WTC11 (cell line): ENCODE measurements at regions of chr15 and their contacts with region 1.

Region 1: DNA sequence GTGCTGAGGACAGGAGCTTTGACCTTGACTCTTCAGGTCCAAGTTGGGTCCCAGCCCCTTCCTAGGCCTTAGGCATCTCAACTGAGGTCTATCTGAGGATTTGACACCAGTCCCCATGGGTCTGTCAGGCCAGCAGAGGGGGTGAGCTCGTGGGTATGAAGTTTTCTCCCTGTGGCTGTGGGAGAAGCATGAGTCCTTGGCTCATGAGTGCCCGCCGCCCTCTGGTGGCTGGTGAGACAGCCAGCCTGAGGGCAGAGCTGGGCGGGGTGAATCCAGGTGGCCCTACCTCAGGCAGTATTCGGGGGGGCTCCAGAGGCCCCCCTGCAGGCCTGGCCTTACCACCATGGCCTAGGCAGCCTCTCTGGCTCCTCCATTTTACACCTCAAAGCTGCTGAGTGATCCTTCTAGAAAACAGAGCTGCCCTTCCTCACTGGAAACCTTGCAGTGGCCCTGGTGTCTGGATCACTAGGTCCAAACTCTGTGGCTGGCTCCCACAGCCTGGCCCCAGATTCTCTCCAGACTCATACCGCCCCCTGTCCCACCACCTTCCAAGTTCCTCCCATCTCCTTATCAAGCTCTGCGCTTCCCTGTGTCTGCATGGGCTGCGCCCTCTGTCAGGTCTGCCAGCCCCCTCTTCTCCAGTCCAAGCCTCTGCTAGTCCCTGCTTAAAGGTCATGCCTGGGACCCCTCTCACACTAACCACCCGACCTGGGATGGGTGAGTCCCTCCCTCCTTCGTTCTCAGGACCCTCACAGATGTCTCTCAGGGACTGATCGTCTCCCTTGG is 16.1 kb downstream of the SH2D7 start:
- DNase-seq: peak; percentile 81
- ATAC-seq: peak; percentile 89
- H3K4me3 Mint-ChIP-seq: no peak overlapping the region
- H3K27ac Mint-ChIP-seq: no peak overlapping the region
- H3K4me1 Mint-ChIP-seq: peaks cover 3% of the 10 kb centered on the region; the same call in 1 of the 2 replicates
- H3K27me3 Mint-ChIP-seq: no peaks in the 10 kb centered on the region
- CTCF ChIP-seq: peak; percentile 61

Region 2: GRCh38 chr15:77966540-77967290 is 141.8 kb before region 1 on chr15:
- CTCF ChIA-PET with region 1: interaction called, 15 read pairs
- POLR2A ChIA-PET with region 1: no interaction called
- DNase-seq: peak; percentile 64
- ATAC-seq: peak; percentile 89
- H3K4me3 Mint-ChIP-seq: no peak overlapping the region
- H3K27ac Mint-ChIP-seq: no peak overlapping the region
- H3K4me1 Mint-ChIP-seq: no peaks in the 10 kb centered on the region
- H3K27me3 Mint-ChIP-seq: peaks cover 6% of the 10 kb centered on the region; the same call in 1 of the 2 replicates
- CTCF ChIP-seq: peak; percentile 60; the same call in 1 of the 2 replicates

Region 3: GRCh38 chr15:78049691-78050440 is 58.6 kb before region 1 on chr15:
- CTCF ChIA-PET with region 1: interaction called, 16 read pairs
- POLR2A ChIA-PET with region 1: no interaction called
- DNase-seq: no peak
- ATAC-seq: no peak
- H3K4me3 Mint-ChIP-seq: no peak overlapping the region
- H3K27ac Mint-ChIP-seq: no peak overlapping the region
- H3K4me1 Mint-ChIP-seq: peaks cover 21% of the 10 kb centered on the region
- H3K27me3 Mint-ChIP-seq: no peaks in the 10 kb centered on the region
- CTCF ChIP-seq: no peak

Region 4: GRCh38 chr15:78087951-78088772 is 20.3 kb before region 1 on chr15:
- CTCF ChIA-PET with region 1: interaction called, 17 read pairs
- POLR2A ChIA-PET with region 1: no interaction called
- DNase-seq: no peak
- ATAC-seq: no peak
- H3K4me3 Mint-ChIP-seq: no peak overlapping the region
- H3K27ac Mint-ChIP-seq: no peak overlapping the region
- H3K4me1 Mint-ChIP-seq: no peaks in the 10 kb centered on the region
- H3K27me3 Mint-ChIP-seq: peaks cover 25% of the 10 kb centered on the region
- CTCF ChIP-seq: no peak

Region 5: GRCh38 chr15:78131295-78132061 is 23.0 kb after region 1 on chr15 and contains the start of gene CIB2:
- CTCF ChIA-PET with region 1: interaction called, 26 read pairs
- POLR2A ChIA-PET with region 1: interaction called, 4 read pairs
- DNase-seq: peak; percentile 82
- ATAC-seq: peak; percentile 85
- H3K4me3 Mint-ChIP-seq: peak within 1 kb of the TSS; percentile 84
- H3K27ac Mint-ChIP-seq: peak within 1 kb of the TSS; percentile 88
- H3K4me1 Mint-ChIP-seq: peaks cover 32% of the 10 kb centered on the region
- H3K27me3 Mint-ChIP-seq: no peaks in the 10 kb centered on the region
- CTCF ChIP-seq: peak; percentile 35; the same call in 1 of the 2 replicates
- total RNA-seq, gene CIB2: 45.2 to 56.4 TPM (median 56.2 TPM) in 3 replicates

Region 6: GRCh38 chr15:78155355-78155939 is 47.0 kb after region 1 on chr15:
- CTCF ChIA-PET with region 1: interaction called, 10 read pairs
- POLR2A ChIA-PET with region 1: no interaction called
- DNase-seq: no peak
- ATAC-seq: no peak
- H3K4me3 Mint-ChIP-seq: no peak overlapping the region
- H3K27ac Mint-ChIP-seq: no peak overlapping the region
- H3K4me1 Mint-ChIP-seq: peaks cover 36% of the 10 kb centered on the region
- H3K27me3 Mint-ChIP-seq: no peaks in the 10 kb centered on the region
- CTCF ChIP-seq: no peak

Region 7: DNA sequence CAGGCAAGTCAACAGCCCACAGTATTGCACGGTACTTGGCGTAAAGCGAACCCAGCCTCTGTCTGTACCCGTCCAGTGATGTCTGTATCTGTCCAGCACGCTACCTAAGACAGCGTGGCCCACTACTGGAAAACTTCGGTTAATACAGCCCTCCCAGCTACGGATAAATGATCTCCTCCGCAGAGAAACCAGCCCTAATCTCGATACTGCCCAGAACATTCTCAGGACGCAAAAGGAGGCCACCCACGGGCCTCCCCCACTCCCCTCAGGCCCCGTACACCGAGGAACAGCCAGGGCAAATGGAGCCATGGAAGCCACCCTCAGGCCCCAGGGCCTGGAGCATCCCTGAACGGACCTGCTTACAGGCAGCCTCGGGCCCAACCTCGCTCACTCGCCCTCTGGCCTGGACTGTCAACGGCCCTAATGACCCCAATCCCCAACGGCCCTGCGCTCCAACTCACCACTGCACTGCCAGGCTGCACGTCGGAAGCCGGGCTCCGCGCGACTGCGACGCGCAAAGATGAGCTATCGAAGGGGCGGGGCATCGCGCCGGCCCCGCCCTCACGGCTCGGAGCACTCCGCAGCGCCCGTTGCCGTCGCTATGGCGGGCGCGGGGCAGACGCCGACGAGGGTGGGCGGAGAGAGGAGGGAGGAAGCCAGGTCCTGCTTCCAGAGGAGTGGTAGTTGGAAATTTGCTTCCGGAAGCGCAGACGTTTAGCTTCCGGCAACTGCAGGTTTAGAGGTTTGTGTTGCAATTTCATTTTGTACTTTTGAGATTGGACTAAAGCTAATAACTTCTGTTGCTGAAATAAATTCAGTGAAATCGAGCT is 190.8 kb after region 1 on chr15 and contains the start of gene SKIC8:
- CTCF ChIA-PET with region 1: interaction called, 11 read pairs
- POLR2A ChIA-PET with region 1: interaction called, 3 read pairs
- DNase-seq: peak; percentile 91
- ATAC-seq: peak; percentile 94
- H3K4me3 Mint-ChIP-seq: peak within 1 kb of the TSS; percentile 95
- H3K27ac Mint-ChIP-seq: peak within 1 kb of the TSS; percentile 91
- H3K4me1 Mint-ChIP-seq: peaks cover 4% of the 10 kb centered on the region
- H3K27me3 Mint-ChIP-seq: peaks cover 12% of the 10 kb centered on the region
- CTCF ChIP-seq: no peak
- total RNA-seq, gene SKIC8: 49.5 to 55.6 TPM (median 50.9 TPM) in 3 replicates